ENCODE measurements at regions of chr10 and their contacts with region 1.

Region 1: GRCh38 chr10:120948889-120949608 is 97.9 kb downstream of the WDR11 start:
- DNase-seq: peak; percentile 45
- H3K4me3 ChIP-seq: no peak overlapping the region
- H3K27ac ChIP-seq: no peak overlapping the region
- H3K4me1 ChIP-seq: peaks cover 30% of the 10 kb centered on the region
- H3K27me3 ChIP-seq: no peaks in the 10 kb centered on the region
- CTCF ChIP-seq: peak; percentile 52 to 92

Region 2: GRCh38 chr10:120850911-120851865 is 97.9 kb before region 1 on chr10 and contains the start of gene WDR11:
- CTCF ChIA-PET with region 1: no interaction called
- dilution Hi-C with region 1: no loop called
- in situ Hi-C with region 1: no loop called
- intact Hi-C with region 1: no loop called
- DNase-seq: peak; percentile 92
- H3K4me3 ChIP-seq: peak within 1 kb of the TSS; percentile 68 to 84 (median 77)
- H3K27ac ChIP-seq: peak within 1 kb of the TSS; percentile 77
- H3K4me1 ChIP-seq: peaks cover 4% of the 10 kb centered on the region
- H3K27me3 ChIP-seq: no peaks in the 10 kb centered on the region
- CTCF ChIP-seq: no peak
- total RNA-seq, gene WDR11: 57.8 to 91.5 TPM

Region 3: DNA sequence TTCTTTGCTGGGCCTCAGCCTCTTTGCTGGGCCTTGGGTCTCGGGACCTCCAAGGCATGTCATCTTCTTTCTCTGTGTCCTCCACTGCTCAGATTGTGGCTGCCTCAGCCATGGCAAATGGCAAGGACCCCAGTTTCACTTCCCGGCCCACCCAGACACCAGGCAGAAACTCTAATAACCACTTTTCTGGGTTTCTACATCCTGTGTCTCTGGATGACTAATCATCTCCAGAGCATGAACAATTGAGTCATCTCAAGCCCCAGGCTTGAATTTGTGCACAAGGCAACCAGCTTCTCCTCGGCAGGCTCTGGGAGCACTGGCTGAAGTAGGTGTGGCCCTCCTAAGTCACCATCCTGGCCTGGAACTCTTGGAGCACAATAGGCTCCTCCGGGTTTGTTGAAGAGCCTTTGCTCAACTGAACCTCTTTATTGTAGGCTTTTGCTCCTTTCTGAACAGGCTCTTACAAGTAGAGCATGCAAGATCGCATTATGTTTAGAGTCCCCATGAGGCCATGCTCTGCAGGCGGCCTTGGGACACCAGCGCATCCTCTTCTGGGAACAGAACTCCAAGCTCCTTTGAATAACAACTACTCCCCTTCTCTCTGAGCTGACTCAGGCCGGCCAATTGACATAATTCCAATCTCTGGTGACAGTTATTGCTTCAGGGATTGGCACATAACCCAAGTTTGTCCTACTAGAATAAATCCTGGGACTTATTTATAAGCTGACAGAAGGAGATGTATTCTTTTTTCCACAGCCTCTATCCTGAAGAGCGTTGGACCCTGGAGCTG is 120.2 kb after region 1 on chr10:
- CTCF ChIA-PET with region 1: no interaction called
- dilution Hi-C with region 1: no loop called
- in situ Hi-C with region 1: loop called in 1 of 2 experiments (anchors 10 kb)
- intact Hi-C with region 1: no loop called
- DNase-seq: peak; percentile 98
- H3K4me3 ChIP-seq: no peak overlapping the region
- H3K27ac ChIP-seq: peak overlapping the region; percentile 86
- H3K4me1 ChIP-seq: peaks cover 20% of the 10 kb centered on the region
- H3K27me3 ChIP-seq: no peaks in the 10 kb centered on the region
- CTCF ChIP-seq: no peak

Region 4: DNA sequence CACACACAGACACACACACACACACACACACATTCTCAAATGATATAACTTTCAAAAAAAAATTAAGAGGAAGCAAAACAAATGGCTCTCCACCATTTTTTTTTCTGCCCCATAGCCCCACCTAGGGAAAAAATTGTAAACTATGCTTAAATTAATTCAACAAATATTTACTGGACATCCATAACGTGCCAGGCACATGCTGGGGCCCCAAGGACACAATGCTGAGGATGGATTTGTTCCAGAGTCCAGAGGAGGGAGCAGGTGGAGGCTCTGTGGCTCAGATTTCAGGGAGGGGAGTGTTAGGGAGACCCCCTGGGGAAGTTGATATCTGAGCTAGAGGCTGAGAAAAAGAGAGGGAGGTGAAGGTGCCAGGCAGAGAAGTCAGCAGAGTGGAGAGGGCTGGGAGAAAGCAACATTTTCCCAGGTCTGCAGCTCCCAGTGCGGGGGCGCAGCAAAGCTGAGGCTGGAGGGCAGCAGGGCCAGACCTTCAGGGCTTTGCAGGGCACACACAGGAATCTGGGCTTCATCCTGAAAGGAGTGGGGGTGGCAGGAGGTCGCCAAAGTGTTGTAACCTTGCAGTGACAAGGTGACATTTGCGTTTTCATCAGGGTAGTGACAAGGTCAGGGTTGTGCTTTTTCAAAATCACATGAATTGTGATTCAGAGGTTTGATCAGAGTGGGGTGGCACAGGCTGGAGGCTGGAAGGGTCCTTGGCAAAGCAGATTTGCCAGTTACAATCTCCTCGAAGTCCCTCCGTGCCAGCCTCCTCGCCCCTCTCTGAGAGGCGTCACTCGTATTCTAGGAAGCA is 163.7 kb after region 1 on chr10:
- CTCF ChIA-PET with region 1: no interaction called
- dilution Hi-C with region 1: no loop called
- in situ Hi-C with region 1: no loop called
- intact Hi-C with region 1: loop called (anchors 2 kb)
- DNase-seq: peak; percentile 8
- H3K4me3 ChIP-seq: no peak overlapping the region
- H3K27ac ChIP-seq: peak overlapping the region; percentile 38
- H3K4me1 ChIP-seq: peaks cover 21% of the 10 kb centered on the region
- H3K27me3 ChIP-seq: no peaks in the 10 kb centered on the region
- CTCF ChIP-seq: no peak